ENCODE measurements at regions of chr16 and their contacts with region 1.

Region 1: DNA sequence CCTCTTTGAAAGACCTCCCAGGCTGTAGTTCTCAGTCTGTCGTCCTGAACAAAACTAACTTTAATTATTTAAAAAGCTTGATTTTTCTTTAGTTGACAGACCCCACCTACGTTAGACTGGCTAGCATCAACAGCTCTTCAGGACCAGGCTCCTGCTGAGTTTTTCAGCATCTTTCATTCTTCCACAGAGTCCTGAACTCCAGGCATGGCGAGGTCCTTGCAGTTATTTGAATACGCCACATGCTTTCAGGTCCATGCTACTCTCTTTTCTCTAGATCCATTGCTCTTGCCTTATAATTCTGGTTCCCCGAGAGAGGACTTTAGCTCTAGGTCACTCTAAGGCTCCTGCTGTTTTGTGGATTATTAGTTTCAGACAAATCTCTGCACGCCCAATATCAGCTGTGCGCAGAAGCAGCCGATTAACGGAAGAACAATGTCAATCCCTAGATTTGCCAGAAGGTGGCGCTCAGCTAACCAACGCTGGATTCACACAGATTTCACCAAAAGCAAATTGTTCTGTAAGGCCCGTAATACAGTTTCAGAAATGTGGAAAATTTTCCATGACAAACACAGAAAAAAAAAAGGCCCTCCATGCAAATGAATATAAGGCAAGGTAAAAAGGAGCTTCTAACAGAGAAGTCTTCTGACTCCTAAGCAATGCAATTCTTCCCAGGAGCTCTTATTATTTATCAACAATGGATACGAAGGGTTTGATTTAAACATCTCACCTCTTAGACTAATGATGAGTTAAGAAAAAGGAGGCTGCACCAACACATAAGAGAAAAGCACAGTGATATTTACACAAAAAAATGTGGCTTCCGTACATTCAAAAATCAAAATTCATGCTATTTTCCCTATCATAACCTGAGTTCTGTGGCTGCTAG is 33.5 kb upstream of the BCO1 start:
- DNase-seq: peak; percentile 59
- ATAC-seq: 0 out of 2 replicates have a peak, but pooled peaks have one; percentile 16
- H3K4me3 ChIP-seq: no peak overlapping the region
- H3K27ac ChIP-seq: no peak overlapping the region
- H3K4me1 ChIP-seq: peaks cover 6% of the 10 kb centered on the region; the same call in 1 of the 2 replicates
- H3K27me3 ChIP-seq: no peaks in the 10 kb centered on the region
- CTCF ChIP-seq: peak; percentile 71

Region 2: GRCh38 chr16:81136390-81137342 is 68.4 kb before region 1 on chr16:
- CTCF ChIA-PET with region 1: no interaction called
- POLR2A ChIA-PET with region 1: no interaction called
- intact Hi-C with region 1: no loop called
- DNase-seq: no peak
- ATAC-seq: no peak
- H3K4me3 ChIP-seq: no peak overlapping the region
- H3K27ac ChIP-seq: no peak overlapping the region
- H3K4me1 ChIP-seq: 0 out of 2 replicates have a peak, but pooled peaks cover 4% of the 10 kb centered on the region
- H3K27me3 ChIP-seq: no peaks in the 10 kb centered on the region
- CTCF ChIP-seq: no peak

Region 3: GRCh38 chr16:81349996-81350618 is 145.1 kb after region 1 on chr16:
- CTCF ChIA-PET with region 1: no interaction called
- POLR2A ChIA-PET with region 1: no interaction called
- intact Hi-C with region 1: loop called (anchors 10 kb)
- DNase-seq: peak; percentile 57
- ATAC-seq: peak; percentile 84
- H3K4me3 ChIP-seq: no peak overlapping the region
- H3K27ac ChIP-seq: no peak overlapping the region
- H3K4me1 ChIP-seq: no peaks in the 10 kb centered on the region
- H3K27me3 ChIP-seq: no peaks in the 10 kb centered on the region
- CTCF ChIP-seq: peak; percentile 62

Region 4: GRCh38 chr16:81737885-81738786 is 533.1 kb after region 1 on chr16:
- CTCF ChIA-PET with region 1: no interaction called
- POLR2A ChIA-PET with region 1: no interaction called
- intact Hi-C with region 1: loop called (anchors 1 kb)
- DNase-seq: peak; percentile 86
- ATAC-seq: peak; percentile 96
- H3K4me3 ChIP-seq: peak overlapping the region; percentile 54; the same call in 1 of the 2 replicates
- H3K27ac ChIP-seq: no peak overlapping the region
- H3K4me1 ChIP-seq: peaks cover 5% of the 10 kb centered on the region; the same call in 1 of the 2 replicates
- H3K27me3 ChIP-seq: no peaks in the 10 kb centered on the region
- CTCF ChIP-seq: peak; percentile 78

Measured in PC-3 (cell line).